CD4-positive, alpha-beta T cell (primary cell): ENCODE measurements at regions of chr6 and their contacts with region 1.

Region 1: DNA sequence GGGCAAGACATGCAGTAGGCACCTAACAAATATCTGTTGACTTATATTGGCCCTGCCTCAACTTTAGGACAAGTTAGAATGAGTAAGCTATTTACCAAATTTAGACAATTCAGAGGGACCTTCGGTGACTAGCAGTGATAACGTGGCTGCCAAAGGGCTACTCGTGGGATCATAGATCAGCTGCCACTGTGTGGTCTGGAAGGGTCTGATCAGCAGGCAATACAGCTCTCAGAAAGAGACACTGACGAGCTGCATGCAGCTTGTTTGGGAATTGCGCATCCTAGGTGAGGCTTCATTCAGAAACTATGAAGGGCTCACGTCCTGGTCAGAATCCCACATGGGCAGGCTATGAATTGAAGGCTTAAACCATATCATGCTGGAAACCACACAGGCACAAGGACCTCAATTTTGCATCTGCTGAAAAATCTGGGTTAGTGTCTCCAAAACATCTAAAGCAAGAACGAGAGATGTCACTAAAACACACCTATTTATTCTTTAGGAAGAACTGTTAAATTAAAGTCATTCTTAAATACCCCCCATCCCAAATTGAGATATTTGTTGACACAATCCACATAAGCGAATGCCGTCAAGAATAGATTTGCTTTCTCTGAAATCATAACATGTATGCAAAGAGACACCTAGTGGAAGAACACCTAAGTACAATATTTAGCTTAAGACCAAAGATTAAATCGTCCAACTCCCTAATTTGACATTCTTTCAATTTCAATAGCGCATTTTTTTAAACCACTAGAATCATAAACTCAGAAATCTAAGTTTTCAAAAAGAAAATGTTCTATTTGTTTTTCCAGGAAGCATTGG is 79.6 kb downstream of the IPCEF1 start:
- DNase-seq: peak in 4 of 14 experiments; percentile 5 to 77 (median 75)
- ATAC-seq: peak; percentile 93
- H3K4me3 ChIP-seq: peak overlapping the region; percentile 19
- H3K4me3 Mint-ChIP-seq: peak overlapping the region; percentile 71
- H3K27ac ChIP-seq: no peak overlapping the region
- H3K27ac Mint-ChIP-seq: peak overlapping the region; percentile 34
- H3K4me1 ChIP-seq: peaks cover 10% of the 10 kb centered on the region
- H3K4me1 Mint-ChIP-seq: peaks cover 50% of the 10 kb centered on the region
- H3K27me3 ChIP-seq: no peaks in the 10 kb centered on the region
- H3K27me3 Mint-ChIP-seq: no peaks in the 10 kb centered on the region
- CTCF ChIP-seq: peak; percentile 74

Region 2: DNA sequence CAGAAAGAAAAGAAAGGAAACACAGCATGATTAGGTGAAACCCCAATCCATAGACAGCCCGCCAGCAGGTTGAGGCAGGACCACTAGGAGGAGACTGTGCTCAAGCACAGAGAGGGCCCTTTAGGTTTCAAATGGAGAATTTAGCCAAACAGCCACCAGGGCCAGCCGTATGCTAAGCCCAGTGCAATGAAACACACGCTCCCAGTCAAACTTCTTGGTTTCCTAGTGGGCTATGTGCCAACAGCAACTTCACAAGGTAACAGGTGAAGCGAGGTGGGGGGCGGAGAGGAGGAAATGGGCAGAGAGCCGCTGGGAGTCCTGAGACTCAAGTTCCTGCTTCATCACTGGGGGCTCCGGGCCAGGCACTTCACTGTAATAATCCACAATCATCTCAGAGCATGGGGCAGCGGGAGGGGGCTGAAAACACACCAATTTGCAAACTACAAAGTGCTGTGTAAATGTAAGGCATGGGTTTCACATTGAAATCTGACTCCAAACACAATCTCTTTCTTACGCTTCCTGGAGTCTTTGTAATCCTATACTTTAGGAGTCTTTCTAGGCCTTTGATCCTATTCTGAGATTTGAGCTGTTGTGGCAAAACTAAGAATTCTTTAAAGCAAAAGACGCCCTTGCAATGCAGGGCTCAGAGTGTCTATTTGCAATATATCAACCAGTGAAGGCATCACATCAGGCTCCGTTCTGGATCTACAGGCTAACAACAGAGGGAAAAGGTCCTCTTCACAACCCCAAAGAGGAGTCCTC is 120.7 kb before region 1 on chr6:
- CTCF ChIA-PET with region 1: interaction called, 117 read pairs
- POLR2A ChIA-PET with region 1: interaction called, 18 read pairs
- intact Hi-C with region 1: loop called (anchors 1 kb)
- DNase-seq: peak; percentile 36 to 84 (median 58)
- ATAC-seq: peak; percentile 93
- H3K4me3 ChIP-seq: peak overlapping the region; percentile 44
- H3K4me3 Mint-ChIP-seq: peak overlapping the region; percentile 80
- H3K27ac ChIP-seq: peak overlapping the region; percentile 75 to 77
- H3K27ac Mint-ChIP-seq: peak overlapping the region; percentile 93
- H3K4me1 ChIP-seq: peaks cover 33% of the 10 kb centered on the region
- H3K4me1 Mint-ChIP-seq: peaks cover 68% of the 10 kb centered on the region
- H3K27me3 ChIP-seq: no peaks in the 10 kb centered on the region
- H3K27me3 Mint-ChIP-seq: no peaks in the 10 kb centered on the region
- CTCF ChIP-seq: peak; percentile 78

Region 3: DNA sequence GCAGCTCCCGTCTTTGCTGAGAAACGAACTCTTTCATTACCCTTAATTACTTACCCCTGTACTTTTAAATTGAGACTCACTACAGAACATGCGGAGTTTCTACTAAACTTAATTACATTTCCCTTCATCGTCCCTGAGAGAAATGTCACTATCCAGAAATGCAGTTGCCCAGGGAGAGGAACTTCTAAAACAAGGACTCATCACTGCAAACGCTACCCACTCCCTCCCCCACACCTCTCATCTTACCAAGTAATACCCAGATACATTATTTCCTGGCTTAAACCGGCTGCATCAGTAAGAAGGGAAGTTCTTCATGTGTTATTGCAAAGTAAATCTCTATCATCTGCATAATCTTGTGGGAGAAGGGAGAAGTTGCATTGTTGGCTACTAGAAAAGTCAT is 58.7 kb before region 1 on chr6:
- CTCF ChIA-PET with region 1: interaction called, 7 read pairs
- POLR2A ChIA-PET with region 1: interaction called, 5 read pairs
- intact Hi-C with region 1: loop called in 1 of 2 experiments (anchors 5 kb)
- DNase-seq: peak in 1 of 14 experiments; percentile 41
- ATAC-seq: no peak
- H3K4me3 ChIP-seq: no peak overlapping the region
- H3K4me3 Mint-ChIP-seq: peak overlapping the region; percentile 62
- H3K27ac ChIP-seq: peak overlapping the region in 1 of 2 donors; percentile 31
- H3K27ac Mint-ChIP-seq: peak overlapping the region; percentile 74
- H3K4me1 ChIP-seq: peaks cover 24% of the 10 kb centered on the region
- H3K4me1 Mint-ChIP-seq: peaks cover 68% of the 10 kb centered on the region
- H3K27me3 ChIP-seq: no peaks in the 10 kb centered on the region
- H3K27me3 Mint-ChIP-seq: no peaks in the 10 kb centered on the region
- CTCF ChIP-seq: no peak

Region 4: GRCh38 chr6:154229786-154230185 is 47.2 kb before region 1 on chr6:
- CTCF ChIA-PET with region 1: interaction called, 5 read pairs
- POLR2A ChIA-PET with region 1: interaction called, 11 read pairs
- intact Hi-C with region 1: no loop called
- DNase-seq: peak in 4 of 14 experiments; percentile 42 to 81 (median 65)
- ATAC-seq: peak; percentile 60
- H3K4me3 ChIP-seq: peak overlapping the region; percentile 39
- H3K4me3 Mint-ChIP-seq: peak overlapping the region; percentile 89
- H3K27ac ChIP-seq: peak overlapping the region in 1 of 2 donors; percentile 40
- H3K27ac Mint-ChIP-seq: peak overlapping the region; percentile 87
- H3K4me1 ChIP-seq: peaks cover 39% of the 10 kb centered on the region
- H3K4me1 Mint-ChIP-seq: peaks cover 82% of the 10 kb centered on the region
- H3K27me3 ChIP-seq: no peaks in the 10 kb centered on the region
- H3K27me3 Mint-ChIP-seq: no peaks in the 10 kb centered on the region
- CTCF ChIP-seq: no peak

Region 5: DNA sequence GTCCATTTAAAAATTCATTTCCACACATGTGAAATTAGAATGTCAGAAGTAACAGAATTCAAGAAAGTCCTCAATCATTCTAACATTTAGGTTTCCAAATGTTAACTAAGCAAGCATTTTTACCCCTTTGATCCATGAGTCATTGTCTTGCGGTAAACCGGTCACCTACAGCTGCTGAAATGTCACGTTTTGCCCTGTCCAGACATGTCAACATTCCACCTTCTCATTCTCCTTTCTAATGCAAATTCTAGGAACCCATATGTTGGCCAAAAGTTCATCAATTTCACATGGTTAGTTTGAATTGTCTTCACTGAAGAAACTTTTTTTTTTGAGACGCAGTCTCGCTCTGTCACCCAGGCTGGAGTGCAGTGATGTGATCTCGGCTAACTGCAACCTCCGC is 37.6 kb before region 1 on chr6:
- CTCF ChIA-PET with region 1: interaction called, 5 read pairs
- POLR2A ChIA-PET with region 1: interaction called, 4 read pairs
- intact Hi-C with region 1: loop called (anchors 5 kb)
- DNase-seq: peak in 4 of 14 experiments; percentile 40 to 67 (median 54)
- ATAC-seq: peak; percentile 62
- H3K4me3 ChIP-seq: peak overlapping the region; percentile 19
- H3K4me3 Mint-ChIP-seq: peak overlapping the region; percentile 82
- H3K27ac ChIP-seq: no peak overlapping the region
- H3K27ac Mint-ChIP-seq: peak overlapping the region; percentile 83
- H3K4me1 ChIP-seq: peaks cover 51% of the 10 kb centered on the region
- H3K4me1 Mint-ChIP-seq: peaks cover 80% of the 10 kb centered on the region
- H3K27me3 ChIP-seq: no peaks in the 10 kb centered on the region
- H3K27me3 Mint-ChIP-seq: no peaks in the 10 kb centered on the region
- CTCF ChIP-seq: no peak

Region 6: GRCh38 chr6:154247119-154247861 is 29.7 kb before region 1 on chr6:
- CTCF ChIA-PET with region 1: interaction called, 17 read pairs
- POLR2A ChIA-PET with region 1: interaction called, 27 read pairs
- intact Hi-C with region 1: loop called in 1 of 2 experiments (anchors 1 kb)
- DNase-seq: peak in 5 of 14 experiments; percentile 19 to 78 (median 63)
- ATAC-seq: peak; percentile 54
- H3K4me3 ChIP-seq: peak overlapping the region; percentile 72
- H3K4me3 Mint-ChIP-seq: peak overlapping the region; percentile 95
- H3K27ac ChIP-seq: peak overlapping the region; percentile 75 to 88
- H3K27ac Mint-ChIP-seq: peak overlapping the region; percentile 93
- H3K4me1 ChIP-seq: peaks cover 42% of the 10 kb centered on the region
- H3K4me1 Mint-ChIP-seq: peaks cover 94% of the 10 kb centered on the region
- H3K27me3 ChIP-seq: no peaks in the 10 kb centered on the region
- H3K27me3 Mint-ChIP-seq: no peaks in the 10 kb centered on the region
- CTCF ChIP-seq: no peak

Region 7: DNA sequence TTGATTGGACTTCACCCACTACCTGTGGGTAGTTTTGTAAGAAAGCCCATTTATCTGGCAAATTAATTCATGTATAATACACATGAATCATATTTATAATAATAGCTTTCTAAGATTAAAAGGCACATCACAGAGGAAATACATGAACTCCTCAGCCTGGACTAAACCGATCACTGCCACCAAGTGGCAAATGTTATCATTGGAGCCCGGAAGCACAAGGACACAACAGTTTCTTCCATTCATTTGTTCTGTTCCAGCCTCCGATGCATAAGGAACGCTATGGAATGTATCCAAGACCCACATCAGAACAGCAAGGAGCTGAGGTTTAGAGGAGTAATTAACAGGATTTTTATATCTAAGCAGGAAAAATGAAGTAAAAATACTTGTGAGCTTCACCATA is 93.5 kb after region 1 on chr6:
- CTCF ChIA-PET with region 1: interaction called, 4 read pairs
- POLR2A ChIA-PET with region 1: no interaction called
- intact Hi-C with region 1: loop called in 1 of 2 experiments (anchors 5 kb)
- DNase-seq: peak in 5 of 14 experiments; percentile 4 to 55 (median 31)
- ATAC-seq: peak; percentile 49
- H3K4me3 ChIP-seq: no peak overlapping the region
- H3K4me3 Mint-ChIP-seq: no peak overlapping the region
- H3K27ac ChIP-seq: no peak overlapping the region
- H3K27ac Mint-ChIP-seq: no peak overlapping the region
- H3K4me1 ChIP-seq: no peaks in the 10 kb centered on the region
- H3K4me1 Mint-ChIP-seq: peaks cover 8% of the 10 kb centered on the region
- H3K27me3 ChIP-seq: no peaks in the 10 kb centered on the region
- H3K27me3 Mint-ChIP-seq: no peaks in the 10 kb centered on the region
- CTCF ChIP-seq: peak; percentile 55